ENCODE measurements at regions of chr15 and their contacts with region 1.

Region 1: DNA sequence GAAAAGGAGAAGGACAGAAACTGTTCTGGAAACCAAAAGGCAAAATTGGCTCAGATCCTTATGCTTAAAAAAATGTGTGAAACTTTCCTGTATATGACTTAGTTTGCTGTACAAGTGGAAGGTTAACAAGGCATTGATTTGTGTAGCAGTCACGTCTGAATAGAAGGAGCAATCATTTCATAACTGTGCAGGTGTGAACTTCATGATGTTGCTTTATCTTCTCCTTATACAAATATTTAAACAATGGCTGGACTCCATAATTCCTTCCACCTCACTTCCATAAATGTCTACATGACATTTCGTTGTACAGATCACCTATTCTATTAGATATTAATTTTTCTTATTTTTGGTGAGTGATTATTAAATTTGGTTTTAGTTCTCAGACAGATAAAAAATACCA is 382.7 kb upstream of the NPAP1 start:
- DNase-seq: no peak

Region 2: GRCh38 chr15:22866079-22866478 is 1426.8 kb before region 1 on chr15:
- intact Hi-C with region 1: no loop called
- DNase-seq: no peak

Region 3: GRCh38 chr15:24008476-24008875 is 284.4 kb before region 1 on chr15:
- intact Hi-C with region 1: no loop called
- DNase-seq: no peak

Region 4: GRCh38 chr15:24924621-24925020 is 631.8 kb after region 1 on chr15:
- intact Hi-C with region 1: loop called in 1 of 2 experiments (anchors 10 kb)
- DNase-seq: no peak

Region 5: DNA sequence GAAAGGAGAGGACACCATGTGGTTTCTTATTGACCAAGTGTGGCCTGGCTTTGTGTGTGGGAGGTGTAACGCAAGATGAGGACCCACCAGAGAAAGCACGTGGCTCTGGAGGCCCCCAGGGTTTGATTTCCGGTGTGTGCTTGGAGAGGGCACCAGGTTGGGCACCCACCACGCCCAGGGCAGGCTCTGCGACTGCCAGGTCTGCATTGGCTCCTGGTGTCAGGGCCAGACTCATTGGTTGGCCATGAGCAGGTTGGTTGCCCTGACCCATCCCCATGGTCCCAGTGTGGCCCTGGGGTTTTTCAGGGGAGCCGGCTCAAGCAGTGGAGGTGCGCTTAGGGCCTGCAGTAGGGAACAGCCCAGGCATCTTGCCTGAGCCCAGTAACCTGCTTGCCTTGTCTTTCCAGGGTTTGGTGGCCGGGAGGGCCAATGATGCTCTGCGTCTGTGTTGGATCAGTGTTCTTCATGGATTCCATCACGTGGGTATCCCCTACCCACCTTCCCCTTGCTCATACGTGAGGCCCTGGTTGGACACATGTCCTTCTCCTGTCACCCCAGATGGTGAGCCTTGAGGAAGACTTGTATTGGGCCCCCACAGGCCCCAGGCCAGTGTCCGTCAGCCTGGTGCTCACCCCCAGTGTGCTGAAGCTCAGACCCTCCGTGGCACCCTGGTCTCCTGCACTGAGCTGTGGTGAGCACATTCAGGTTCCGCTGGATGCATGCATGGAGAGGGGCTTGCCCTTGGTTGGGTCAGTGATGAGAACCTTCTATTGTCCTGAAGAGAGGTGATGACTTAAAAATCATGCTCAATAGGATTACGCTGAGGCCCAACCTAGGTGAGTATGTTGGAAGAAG is 952.1 kb after region 1 on chr15:
- intact Hi-C with region 1: loop called in 1 of 2 experiments (anchors 5 kb)
- DNase-seq: peak; percentile 54

Measured in posterior vena cava (tissue), 2 donors.